ENCODE measurements at regions of chr19 and their contacts with region 1.

Region 1: DNA sequence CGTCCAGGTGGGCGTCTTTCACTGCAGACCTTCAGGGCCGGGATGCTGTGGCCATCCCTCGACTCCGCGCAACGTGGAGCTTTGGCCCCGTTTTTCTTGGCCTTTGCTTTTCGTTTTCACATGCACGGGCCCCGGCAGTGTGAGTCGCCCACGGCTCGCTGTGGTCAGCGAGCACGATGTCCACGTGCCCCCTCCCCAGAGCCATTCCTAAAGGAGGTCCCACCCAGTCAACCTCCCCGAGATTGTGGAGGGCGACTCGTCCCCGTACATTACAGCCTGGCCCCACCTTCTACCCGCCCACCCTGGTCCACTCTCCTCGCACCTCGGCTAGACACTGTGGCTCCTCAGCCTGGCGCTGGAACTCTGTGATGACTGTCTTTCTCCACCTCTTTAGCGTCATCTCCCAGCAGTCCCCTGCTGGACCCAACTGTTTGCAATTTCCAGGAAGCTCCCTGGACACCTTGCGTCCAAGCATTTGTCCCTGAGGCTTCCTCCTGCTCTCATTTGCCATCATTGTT is 405 bp downstream of the ZNF446 start:
- DNase-seq: no peak
- ATAC-seq: no peak
- H3K4me3 ChIP-seq: peak overlapping the region; percentile 76 to 78
- H3K27ac ChIP-seq: peak overlapping the region; percentile 92
- H3K4me1 ChIP-seq: peaks cover 14% of the 10 kb centered on the region
- H3K27me3 ChIP-seq: no peaks in the 10 kb centered on the region
- CTCF ChIP-seq: no peak

Region 2: GRCh38 chr19:58492265-58492664 is 15.7 kb after region 1 on chr19:
- CTCF ChIA-PET with region 1: no interaction called
- POLR2A ChIA-PET with region 1: interaction called, 16 read pairs
- in situ Hi-C with region 1: no loop called
- intact Hi-C with region 1: no loop called
- DNase-seq: no peak
- ATAC-seq: no peak
- H3K4me3 ChIP-seq: no peak overlapping the region
- H3K27ac ChIP-seq: no peak overlapping the region
- H3K4me1 ChIP-seq: no peaks in the 10 kb centered on the region
- H3K27me3 ChIP-seq: no peaks in the 10 kb centered on the region
- CTCF ChIP-seq: no peak